ENCODE measurements at regions of chr10 and their contacts with region 1.

Region 1: DNA sequence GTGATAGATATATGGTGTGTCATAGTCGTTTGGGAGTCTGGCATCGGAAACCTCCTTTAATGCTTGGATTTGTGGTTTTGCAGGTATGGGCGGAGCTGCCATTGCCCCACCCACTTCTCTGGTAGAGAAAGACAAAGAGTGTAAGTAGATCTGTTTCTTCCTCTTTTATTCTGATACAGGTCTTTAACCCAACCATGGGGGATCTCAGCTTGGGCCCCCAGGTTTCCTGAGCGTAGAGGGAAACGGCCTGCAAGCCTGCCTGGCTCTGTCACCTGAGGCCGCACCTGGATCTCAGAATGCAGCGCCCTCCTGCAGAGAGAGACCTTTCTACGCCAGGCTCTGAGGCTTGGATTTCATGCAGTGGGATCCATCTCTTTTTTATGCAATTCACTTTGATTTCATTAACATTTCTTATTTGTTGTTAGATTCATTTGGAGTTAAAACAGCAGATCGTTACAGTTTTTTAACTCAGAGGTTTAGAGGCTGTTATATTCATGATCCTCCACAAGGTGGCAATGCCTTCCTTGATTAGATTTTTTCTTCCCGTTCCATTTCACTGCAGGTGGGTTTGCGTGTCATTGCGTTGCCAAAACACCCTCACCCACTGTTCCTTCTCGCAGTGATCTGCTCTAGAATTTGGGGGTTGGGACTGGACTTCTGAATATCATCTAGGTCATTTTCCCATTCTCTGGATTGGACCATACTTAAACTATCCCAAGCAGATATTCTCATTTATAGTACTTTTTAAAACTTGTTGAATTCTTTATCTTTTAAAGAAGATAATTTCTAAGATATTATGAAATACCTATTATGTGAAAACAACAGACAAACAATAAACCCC is 20.0 kb downstream of the RBM17 start:
- DNase-seq: peak; percentile 57 to 69 (median 65)
- H3K4me3 ChIP-seq: no peak overlapping the region
- H3K4me3 Mint-ChIP-seq: peak overlapping the region in 7 of 8 donors; percentile 67 to 85 (median 75)
- H3K27ac ChIP-seq: peak overlapping the region; percentile 45
- H3K27ac Mint-ChIP-seq: peak overlapping the region; percentile 43 to 95 (median 91)
- H3K4me1 ChIP-seq: peaks cover 28% of the 10 kb centered on the region
- H3K4me1 Mint-ChIP-seq: peaks cover 29 to 54% (median 37%) of the 10 kb centered on the region in 4 donors
- H3K27me3 ChIP-seq: no peaks in the 10 kb centered on the region
- H3K27me3 Mint-ChIP-seq: no peaks in the 10 kb centered on the region

Region 2: GRCh38 chr10:6136215-6137201 is 27.7 kb after region 1 on chr10:
- CTCF ChIA-PET with region 1: interaction called, 20 read pairs
- POLR2A ChIA-PET with region 1: no interaction called
- intact Hi-C with region 1: no loop called
- DNase-seq: peak in 1 of 5 donors; percentile 61
- H3K4me3 ChIP-seq: no peak overlapping the region
- H3K4me3 Mint-ChIP-seq: peak overlapping the region in 7 of 8 donors; percentile 36 to 79 (median 63)
- H3K27ac ChIP-seq: peak overlapping the region; percentile 27
- H3K27ac Mint-ChIP-seq: peak overlapping the region; percentile 59 to 95 (median 89)
- H3K4me1 ChIP-seq: peaks cover 53% of the 10 kb centered on the region
- H3K4me1 Mint-ChIP-seq: peaks cover 43 to 64% (median 56%) of the 10 kb centered on the region in 4 donors
- H3K27me3 ChIP-seq: no peaks in the 10 kb centered on the region
- H3K27me3 Mint-ChIP-seq: no peaks in the 10 kb centered on the region

Region 3: GRCh38 chr10:6144406-6145165 is 35.8 kb after region 1 on chr10:
- CTCF ChIA-PET with region 1: interaction called, 106 read pairs
- POLR2A ChIA-PET with region 1: interaction called, 3 read pairs
- intact Hi-C with region 1: no loop called
- DNase-seq: peak; percentile 85 to 92 (median 87)
- H3K4me3 ChIP-seq: peak overlapping the region; percentile 61 to 85
- H3K4me3 Mint-ChIP-seq: peak overlapping the region; percentile 88 to 95 (median 91)
- H3K27ac ChIP-seq: peak overlapping the region; percentile 84
- H3K27ac Mint-ChIP-seq: peak overlapping the region; percentile 89 to 97 (median 92)
- H3K4me1 ChIP-seq: peaks cover 77% of the 10 kb centered on the region
- H3K4me1 Mint-ChIP-seq: peaks cover 45 to 85% (median 64%) of the 10 kb centered on the region in 4 donors
- H3K27me3 ChIP-seq: no peaks in the 10 kb centered on the region
- H3K27me3 Mint-ChIP-seq: no peaks in the 10 kb centered on the region

Region 4: DNA sequence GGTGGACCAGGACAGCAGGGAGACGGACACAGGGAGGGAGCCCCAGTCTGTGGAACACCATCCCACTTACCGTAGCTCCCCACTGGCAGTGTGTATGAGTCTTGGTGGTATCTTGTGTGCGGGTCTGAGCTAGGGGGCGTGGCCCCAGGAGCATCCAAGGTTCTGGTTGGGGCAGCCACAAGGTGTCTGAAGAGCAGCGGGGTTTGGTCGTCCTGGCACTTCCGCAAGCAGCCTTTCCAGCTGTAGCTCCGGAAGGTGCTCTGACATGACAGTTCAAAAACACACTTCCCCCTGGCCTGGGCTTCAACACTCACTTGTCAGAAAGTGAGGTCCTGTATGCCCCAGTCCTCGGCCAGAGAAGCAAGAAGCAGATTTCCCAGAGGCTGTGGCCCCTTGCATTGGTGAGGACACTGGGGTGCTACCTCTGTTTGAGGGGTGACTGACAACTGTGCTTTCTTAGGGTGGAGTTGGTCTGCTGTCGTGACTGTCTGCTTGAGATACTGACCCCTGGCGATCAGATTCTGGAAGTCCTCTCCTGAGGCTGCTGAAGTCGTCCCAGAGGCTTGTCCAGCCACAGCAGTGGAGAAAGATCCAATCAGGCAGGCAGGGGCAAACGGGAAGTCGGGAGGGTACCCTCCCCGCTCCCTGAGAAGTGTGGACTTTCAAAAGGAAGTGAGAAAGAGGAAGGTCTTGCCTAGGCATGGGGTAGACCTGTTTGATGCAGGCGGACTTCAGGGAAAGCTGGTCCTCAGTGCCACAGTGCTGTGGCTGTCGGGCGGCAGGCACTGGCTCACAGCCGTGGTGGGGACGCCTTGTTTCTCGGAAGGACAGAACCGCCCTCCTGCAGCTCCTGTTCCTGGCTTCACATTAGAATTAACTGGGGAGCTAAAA is 42.5 kb after region 1 on chr10:
- CTCF ChIA-PET with region 1: interaction called, 106 read pairs
- POLR2A ChIA-PET with region 1: interaction called, 3 read pairs
- intact Hi-C with region 1: loop called (anchors 1 kb)
- DNase-seq: peak in 4 of 5 donors; percentile 46 to 64 (median 56)
- H3K4me3 ChIP-seq: no peak overlapping the region
- H3K4me3 Mint-ChIP-seq: peak overlapping the region in 7 of 8 donors; percentile 36 to 75 (median 58)
- H3K27ac ChIP-seq: peak overlapping the region; percentile 1
- H3K27ac Mint-ChIP-seq: peak overlapping the region; percentile 86 to 93 (median 91)
- H3K4me1 ChIP-seq: peaks cover 47% of the 10 kb centered on the region
- H3K4me1 Mint-ChIP-seq: peaks cover 36 to 81% (median 49%) of the 10 kb centered on the region in 4 donors
- H3K27me3 ChIP-seq: no peaks in the 10 kb centered on the region
- H3K27me3 Mint-ChIP-seq: no peaks in the 10 kb centered on the region

Region 5: DNA sequence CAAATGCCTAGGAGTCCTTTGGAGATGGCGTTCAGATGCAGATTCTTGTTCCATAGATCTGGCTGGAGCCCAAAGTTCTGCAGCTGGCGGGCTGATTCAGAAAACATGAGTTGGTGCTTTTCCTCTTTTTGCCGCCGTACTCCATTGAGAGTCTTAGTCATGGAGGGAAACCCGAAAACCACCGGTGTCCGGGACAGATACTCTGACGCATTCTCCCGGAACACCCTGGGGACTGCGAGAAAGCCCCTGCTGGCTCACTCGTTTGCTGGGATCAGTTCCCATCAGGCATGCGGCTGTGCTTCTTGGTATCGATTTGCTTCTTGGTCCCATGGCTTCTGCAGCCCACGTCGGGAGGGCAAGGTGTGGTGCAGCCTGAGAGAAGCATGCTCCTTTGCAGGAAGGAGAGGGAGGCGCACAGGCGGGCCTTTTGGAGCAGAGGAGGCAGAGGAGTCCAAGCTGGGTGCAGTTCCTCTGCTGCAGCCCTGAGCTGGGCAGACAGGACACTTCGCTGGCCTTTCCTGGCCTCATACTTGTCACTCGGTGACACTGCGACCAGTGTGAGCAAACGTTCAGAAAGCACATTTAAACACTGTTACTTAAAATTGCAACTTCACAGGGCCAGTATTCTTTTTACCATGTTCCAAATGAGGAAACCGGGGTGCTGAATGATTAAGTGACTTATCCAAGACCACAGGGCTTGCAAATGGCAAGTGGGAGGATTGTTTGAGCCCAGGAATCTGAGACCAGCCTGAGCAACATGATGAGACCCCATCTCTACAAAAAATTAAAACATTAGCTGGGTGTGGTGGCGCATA is 63.3 kb after region 1 on chr10:
- CTCF ChIA-PET with region 1: interaction called, 12 read pairs
- POLR2A ChIA-PET with region 1: interaction called, 4 read pairs
- intact Hi-C with region 1: no loop called
- DNase-seq: no peak
- H3K4me3 ChIP-seq: no peak overlapping the region
- H3K4me3 Mint-ChIP-seq: peak overlapping the region in 4 of 8 donors; percentile 29 to 79 (median 62)
- H3K27ac ChIP-seq: no peak overlapping the region
- H3K27ac Mint-ChIP-seq: peak overlapping the region in 6 of 7 donors; percentile 22 to 74 (median 58)
- H3K4me1 ChIP-seq: peaks cover 77% of the 10 kb centered on the region
- H3K4me1 Mint-ChIP-seq: peaks cover 50 to 94% (median 72%) of the 10 kb centered on the region in 4 donors
- H3K27me3 ChIP-seq: no peaks in the 10 kb centered on the region
- H3K27me3 Mint-ChIP-seq: no peaks in the 10 kb centered on the region

Region 6: GRCh38 chr10:6678211-6678803 is 569.5 kb after region 1 on chr10:
- CTCF ChIA-PET with region 1: no interaction called
- POLR2A ChIA-PET with region 1: no interaction called
- intact Hi-C with region 1: loop called (anchors 5 kb)
- DNase-seq: peak; percentile 53 to 59 (median 55)
- H3K4me3 ChIP-seq: no peak overlapping the region
- H3K4me3 Mint-ChIP-seq: no peak overlapping the region
- H3K27ac ChIP-seq: no peak overlapping the region
- H3K27ac Mint-ChIP-seq: peak overlapping the region in 1 of 7 donors; percentile 52
- H3K4me1 ChIP-seq: no peaks in the 10 kb centered on the region
- H3K4me1 Mint-ChIP-seq: peaks cover 0 to 6% (median 5%) of the 10 kb centered on the region in 4 donors
- H3K27me3 ChIP-seq: peaks cover 3% of the 10 kb centered on the region
- H3K27me3 Mint-ChIP-seq: peaks cover 4 to 9% of the 10 kb centered on the region in 2 donors

Measured in CD4-positive, alpha-beta memory T cell (primary cell).